ENCODE measurements at regions of chr14 and their contacts with region 1.

Region 1: GRCh38 chr14:100440187-100440631 is 117.1 kb downstream of the SLC25A47 start:
- DNase-seq: peak; percentile 40 to 77
- ATAC-seq: peak; percentile 80 to 90
- H3K4me3 ChIP-seq: no peak overlapping the region
- H3K27ac ChIP-seq: peak overlapping the region; percentile 23 to 38 (median 32)
- H3K4me1 ChIP-seq: peaks cover 14 to 20% of the 10 kb centered on the region in 2 donors
- H3K27me3 ChIP-seq: no peaks in the 10 kb centered on the region
- CTCF ChIP-seq: peak; percentile 64 to 81 (median 73)
- POLR2A ChIP-seq: no peak

Region 2: GRCh38 chr14:100645192-100645990 is 205.2 kb after region 1 on chr14:
- in situ Hi-C with region 1: loop called (anchors 5 to 10 kb)
- intact Hi-C with region 1: loop called (anchors 1 kb)
- DNase-seq: peak; percentile 52 to 62
- ATAC-seq: peak; percentile 79 to 82
- H3K4me3 ChIP-seq: no peak overlapping the region
- H3K27ac ChIP-seq: no peak overlapping the region
- H3K4me1 ChIP-seq: no peaks in the 10 kb centered on the region
- H3K27me3 ChIP-seq: no peaks in the 10 kb centered on the region
- CTCF ChIP-seq: peak; percentile 51 to 74 (median 71)
- POLR2A ChIP-seq: no peak

Measured in gastrocnemius medialis (tissue), 4 donors.